ENCODE measurements at regions of chr3 and their contacts with region 1.

Region 1: GRCh38 chr3:120596116-120596852 is at the start of gene NDUFB4:
- DNase-seq: peak; percentile 82 to 98 (median 93)
- ATAC-seq: peak; percentile 94 to 97 (median 96)
- H3K4me3 ChIP-seq: peak within 1 kb of the TSS; percentile 91 to 97
- H3K4me3 Mint-ChIP-seq: peak within 1 kb of the TSS in 2 of 3 donors; percentile 94 to 96
- H3K27ac ChIP-seq: peak within 1 kb of the TSS; percentile 96
- H3K27ac Mint-ChIP-seq: peak within 1 kb of the TSS; percentile 94 to 97
- H3K4me1 ChIP-seq: peaks cover 11 to 20% of the 10 kb centered on the region in 2 experiments
- H3K4me1 Mint-ChIP-seq: peaks cover 9 to 14% (median 10%) of the 10 kb centered on the region in 3 donors
- H3K27me3 ChIP-seq: no peaks in the 10 kb centered on the region
- H3K27me3 Mint-ChIP-seq: no peaks in the 10 kb centered on the region
- total RNA-seq, gene NDUFB4: 59.3 to 79.6 (median 73.6) TPM

Region 2: GRCh38 chr3:120348981-120349818 is 247.1 kb before region 1 on chr3 and contains the start of gene LRRC58:
- CTCF ChIA-PET with region 1: no interaction called
- POLR2A ChIA-PET with region 1: interaction called in 1 of 2 experiments, 11 read pairs
- DNase-seq: peak; percentile 79 to 95 (median 88)
- ATAC-seq: peak; percentile 90 to 94 (median 92)
- H3K4me3 ChIP-seq: peak within 1 kb of the TSS; percentile 68 to 81
- H3K4me3 Mint-ChIP-seq: peak within 1 kb of the TSS; percentile 88 to 95 (median 95)
- H3K27ac ChIP-seq: peak within 1 kb of the TSS; percentile 60
- H3K27ac Mint-ChIP-seq: peak within 1 kb of the TSS; percentile 92 to 95
- H3K4me1 ChIP-seq: peaks cover 22 to 23% of the 10 kb centered on the region in 2 experiments
- H3K4me1 Mint-ChIP-seq: peaks cover 46 to 47% (median 46%) of the 10 kb centered on the region in 3 donors
- H3K27me3 ChIP-seq: no peaks in the 10 kb centered on the region
- H3K27me3 Mint-ChIP-seq: no peaks in the 10 kb centered on the region
- total RNA-seq, gene LRRC58: 14.4 to 19.2 (median 17.7) TPM

Region 3: GRCh38 chr3:120567370-120568201 is 28.7 kb before region 1 on chr3:
- CTCF ChIA-PET with region 1: interaction called, 12 to 21 read pairs
- POLR2A ChIA-PET with region 1: interaction called in 1 of 2 experiments, 21 read pairs
- DNase-seq: peak in 1 of 35 experiments; percentile 37
- ATAC-seq: peak in 3 of 4 experiments; percentile 54 to 82 (median 65)
- H3K4me3 ChIP-seq: no peak overlapping the region
- H3K4me3 Mint-ChIP-seq: peak overlapping the region in 1 of 3 donors; percentile 7
- H3K27ac ChIP-seq: no peak overlapping the region
- H3K27ac Mint-ChIP-seq: peak overlapping the region in 1 of 2 donors; percentile 48
- H3K4me1 ChIP-seq: no peaks in the 10 kb centered on the region
- H3K4me1 Mint-ChIP-seq: peaks cover 0 to 3% (median 2%) of the 10 kb centered on the region in 3 donors
- H3K27me3 ChIP-seq: peaks cover 0 to 12% of the 10 kb centered on the region in 2 experiments
- H3K27me3 Mint-ChIP-seq: peaks cover 8 to 11% of the 10 kb centered on the region in 2 donors

Region 4: GRCh38 chr3:120742198-120742849 is 146.0 kb after region 1 on chr3 and contains the starts of genes GTF2E1 and RABL3:
- CTCF ChIA-PET with region 1: interaction called in 1 of 2 experiments, 9 read pairs
- POLR2A ChIA-PET with region 1: interaction called, 6 to 13 read pairs
- DNase-seq: peak; percentile 91 to 99 (median 97)
- ATAC-seq: peak; percentile 95 to 98 (median 98)
- H3K4me3 ChIP-seq: peak within 1 kb of the TSS; percentile 65 to 95
- H3K4me3 Mint-ChIP-seq: peak within 1 kb of the TSS; percentile 87 to 95 (median 94)
- H3K27ac ChIP-seq: peak within 1 kb of the TSS; percentile 99
- H3K27ac Mint-ChIP-seq: peak within 1 kb of the TSS; percentile 93 to 98
- H3K4me1 ChIP-seq: peaks cover 12 to 30% of the 10 kb centered on the region in 2 experiments
- H3K4me1 Mint-ChIP-seq: peaks cover 37 to 49% (median 47%) of the 10 kb centered on the region in 3 donors
- H3K27me3 ChIP-seq: no peaks in the 10 kb centered on the region
- H3K27me3 Mint-ChIP-seq: no peaks in the 10 kb centered on the region
- total RNA-seq, gene GTF2E1: 13.3 to 28.5 (median 26.0) TPM
- total RNA-seq, gene RABL3: 14.7 to 31.8 (median 25.0) TPM

Measured in T-cell (primary cell).